CD4-positive, alpha-beta memory T cell (primary cell): ENCODE measurements at regions of chr10 and their contacts with region 1.

Region 1: GRCh38 chr10:69716711-69717560 is 84.8 kb upstream of the COL13A1 start:
- DNase-seq: peak; percentile 35 to 53 (median 38)
- H3K4me3 ChIP-seq: no peak overlapping the region
- H3K4me3 Mint-ChIP-seq: no peak overlapping the region
- H3K27ac ChIP-seq: no peak overlapping the region
- H3K27ac Mint-ChIP-seq: no peak overlapping the region
- H3K4me1 ChIP-seq: no peaks in the 10 kb centered on the region
- H3K4me1 Mint-ChIP-seq: no peaks in the 10 kb centered on the region
- H3K27me3 ChIP-seq: no peaks in the 10 kb centered on the region
- H3K27me3 Mint-ChIP-seq: peaks cover 0 to 4% of the 10 kb centered on the region in 2 donors

Region 2: GRCh38 chr10:69644658-69645295 is 72.2 kb before region 1 on chr10:
- CTCF ChIA-PET with region 1: interaction called, 39 read pairs
- POLR2A ChIA-PET with region 1: no interaction called
- intact Hi-C with region 1: loop called (anchors 1 kb)
- DNase-seq: peak in 2 of 5 donors; percentile 18 to 22
- H3K4me3 ChIP-seq: no peak overlapping the region
- H3K4me3 Mint-ChIP-seq: no peak overlapping the region
- H3K27ac ChIP-seq: no peak overlapping the region
- H3K27ac Mint-ChIP-seq: no peak overlapping the region
- H3K4me1 ChIP-seq: no peaks in the 10 kb centered on the region
- H3K4me1 Mint-ChIP-seq: peaks cover 0 to 1% (median 0%) of the 10 kb centered on the region in 4 donors
- H3K27me3 ChIP-seq: no peaks in the 10 kb centered on the region
- H3K27me3 Mint-ChIP-seq: peaks cover 0 to 2% of the 10 kb centered on the region in 2 donors

Region 3: DNA sequence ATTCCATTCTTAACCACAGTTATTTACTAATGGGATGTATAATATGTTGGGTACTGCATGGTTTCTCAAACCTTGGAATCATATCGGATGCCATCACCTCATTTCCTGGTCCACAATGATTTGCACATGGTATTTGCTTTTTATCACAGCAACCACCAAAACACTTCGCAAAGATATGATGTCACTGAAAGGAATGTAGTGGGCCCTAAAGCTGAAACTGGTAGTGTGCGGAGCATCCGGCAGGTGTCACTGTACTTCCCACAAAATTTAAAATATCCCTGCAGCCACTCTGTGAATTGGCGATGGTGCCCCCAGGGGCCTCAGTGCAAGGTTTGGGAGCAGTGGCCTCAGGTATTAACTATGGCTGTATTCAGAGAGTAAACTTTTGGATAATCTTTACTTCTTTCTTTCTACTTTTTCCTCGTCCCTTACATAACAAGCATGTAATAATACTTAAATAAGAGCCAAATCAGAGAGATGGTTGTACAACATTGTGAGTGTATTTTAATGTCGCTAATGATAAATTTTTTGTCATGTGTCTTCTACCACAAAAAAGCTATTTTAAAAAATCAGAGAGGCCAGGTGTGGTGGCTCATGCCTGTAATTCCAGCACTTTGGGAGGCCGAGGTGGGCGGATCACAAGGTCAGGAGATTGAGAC is 20.7 kb before region 1 on chr10:
- CTCF ChIA-PET with region 1: interaction called, 11 read pairs
- POLR2A ChIA-PET with region 1: no interaction called
- intact Hi-C with region 1: no loop called
- DNase-seq: peak in 2 of 5 donors; percentile 1 to 3
- H3K4me3 ChIP-seq: no peak overlapping the region
- H3K4me3 Mint-ChIP-seq: no peak overlapping the region
- H3K27ac ChIP-seq: no peak overlapping the region
- H3K27ac Mint-ChIP-seq: no peak overlapping the region
- H3K4me1 ChIP-seq: no peaks in the 10 kb centered on the region
- H3K4me1 Mint-ChIP-seq: no peaks in the 10 kb centered on the region
- H3K27me3 ChIP-seq: no peaks in the 10 kb centered on the region
- H3K27me3 Mint-ChIP-seq: peaks cover 20 to 22% of the 10 kb centered on the region in 2 donors

Region 4: DNA sequence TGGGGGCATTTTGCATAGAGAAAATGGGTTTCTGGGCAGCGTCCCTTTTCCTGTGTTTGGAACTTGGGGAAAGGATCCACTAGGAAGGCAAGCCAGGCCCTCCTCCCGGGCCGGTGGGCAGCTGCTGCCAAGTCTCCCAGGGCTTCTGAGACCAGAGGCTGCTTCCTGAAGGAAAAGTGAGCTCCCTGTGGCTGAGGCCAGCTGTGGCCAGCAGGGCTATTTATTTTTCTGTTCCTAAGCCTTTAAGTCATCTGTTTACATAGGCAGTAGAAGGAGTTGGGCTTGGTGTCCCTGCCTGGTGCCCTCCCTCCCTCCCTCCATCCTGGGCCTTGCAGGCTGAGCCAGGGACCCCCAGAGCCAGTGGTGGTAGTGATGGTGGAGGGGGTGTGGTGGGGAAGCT is 14.2 kb after region 1 on chr10:
- CTCF ChIA-PET with region 1: interaction called, 11 read pairs
- POLR2A ChIA-PET with region 1: no interaction called
- intact Hi-C with region 1: no loop called
- DNase-seq: no peak
- H3K4me3 ChIP-seq: no peak overlapping the region
- H3K4me3 Mint-ChIP-seq: no peak overlapping the region
- H3K27ac ChIP-seq: no peak overlapping the region
- H3K27ac Mint-ChIP-seq: no peak overlapping the region
- H3K4me1 ChIP-seq: peaks cover 7% of the 10 kb centered on the region
- H3K4me1 Mint-ChIP-seq: peaks cover 8 to 14% (median 9%) of the 10 kb centered on the region in 4 donors
- H3K27me3 ChIP-seq: no peaks in the 10 kb centered on the region
- H3K27me3 Mint-ChIP-seq: peaks cover 1 to 6% of the 10 kb centered on the region in 2 donors